CD8-positive, alpha-beta T cell (primary cell): ENCODE measurements at regions of chr7 and their contacts with region 1.

Region 1: DNA sequence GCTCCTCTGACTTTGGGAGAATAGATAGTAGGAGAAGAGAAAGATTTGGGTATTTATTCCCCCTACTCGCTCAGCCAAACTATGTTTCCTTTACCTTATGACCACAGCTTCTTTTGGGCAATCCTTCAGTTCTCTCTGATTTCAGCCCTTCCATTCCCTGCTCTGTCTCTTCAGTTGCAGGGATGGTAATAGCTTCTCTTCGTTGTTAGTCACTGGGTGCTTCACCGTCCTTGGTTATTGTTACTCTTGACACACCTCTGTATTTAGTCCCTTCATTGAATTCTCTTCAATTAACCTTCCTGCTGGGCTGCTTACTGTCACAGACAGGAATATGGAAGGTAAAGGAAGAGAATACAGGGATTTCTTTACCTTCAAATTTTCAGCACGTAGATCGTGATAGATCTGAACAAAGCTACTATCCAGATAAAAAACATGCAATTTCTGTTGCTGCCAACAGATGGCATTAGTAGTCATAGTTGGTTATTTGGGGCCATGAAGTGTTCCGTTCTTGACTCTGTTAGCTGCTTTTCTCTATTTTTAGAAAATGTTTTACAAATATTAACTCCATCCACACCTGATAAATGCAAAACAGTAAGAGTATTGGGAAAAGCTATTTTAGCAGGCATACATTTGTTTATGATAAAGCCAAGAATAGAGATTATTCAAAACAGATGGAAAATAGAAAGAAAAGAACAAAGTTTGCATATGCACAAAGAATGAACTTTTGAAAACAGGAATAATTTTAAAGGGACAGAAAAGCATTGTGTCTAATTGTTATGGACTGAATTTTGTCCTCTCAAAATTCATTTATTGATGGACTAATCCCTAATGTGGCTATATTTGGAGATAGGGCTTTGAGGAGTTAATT is 14.0 kb upstream of the PTTG1IP2 start:
- DNase-seq: peak in 2 of 9 experiments; percentile 41 to 56
- ATAC-seq: peak; percentile 59
- H3K4me3 ChIP-seq: no peak overlapping the region
- H3K4me3 Mint-ChIP-seq: peak overlapping the region; percentile 55
- H3K27ac ChIP-seq: no peak overlapping the region
- H3K27ac Mint-ChIP-seq: no peak overlapping the region
- H3K4me1 ChIP-seq: no peaks in the 10 kb centered on the region
- H3K4me1 Mint-ChIP-seq: peaks cover 7% of the 10 kb centered on the region
- H3K27me3 ChIP-seq: no peaks in the 10 kb centered on the region
- H3K27me3 Mint-ChIP-seq: peaks cover 8% of the 10 kb centered on the region
- CTCF ChIP-seq: peak; percentile 76

Region 2: DNA sequence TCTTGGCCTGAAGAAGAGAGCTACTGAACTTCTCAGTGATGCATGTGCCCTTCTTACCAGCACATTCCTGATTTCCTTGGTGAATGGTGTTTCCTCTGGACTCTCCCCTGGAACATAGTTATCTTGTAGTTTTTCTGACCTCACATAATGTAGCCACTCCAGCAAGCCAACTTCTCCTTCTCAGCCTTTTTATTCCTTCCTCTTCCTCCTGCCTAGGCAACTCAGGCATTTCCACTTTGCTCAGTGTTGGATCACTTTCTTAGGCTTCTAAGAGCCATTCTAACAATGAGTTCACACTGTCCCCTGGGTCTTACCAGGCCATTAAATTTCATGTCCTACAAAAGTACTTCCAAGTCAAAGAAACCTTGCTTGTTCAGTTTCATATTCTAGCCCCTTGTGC is 10.4 kb after region 1 on chr7:
- CTCF ChIA-PET with region 1: interaction called, 11 read pairs
- POLR2A ChIA-PET with region 1: no interaction called
- intact Hi-C with region 1: no loop called
- DNase-seq: no peak
- ATAC-seq: no peak
- H3K4me3 ChIP-seq: no peak overlapping the region
- H3K4me3 Mint-ChIP-seq: no peak overlapping the region
- H3K27ac ChIP-seq: no peak overlapping the region
- H3K27ac Mint-ChIP-seq: no peak overlapping the region
- H3K4me1 ChIP-seq: no peaks in the 10 kb centered on the region
- H3K4me1 Mint-ChIP-seq: peaks cover 8% of the 10 kb centered on the region
- H3K27me3 ChIP-seq: no peaks in the 10 kb centered on the region
- H3K27me3 Mint-ChIP-seq: peaks cover 2% of the 10 kb centered on the region
- CTCF ChIP-seq: no peak

Region 3: DNA sequence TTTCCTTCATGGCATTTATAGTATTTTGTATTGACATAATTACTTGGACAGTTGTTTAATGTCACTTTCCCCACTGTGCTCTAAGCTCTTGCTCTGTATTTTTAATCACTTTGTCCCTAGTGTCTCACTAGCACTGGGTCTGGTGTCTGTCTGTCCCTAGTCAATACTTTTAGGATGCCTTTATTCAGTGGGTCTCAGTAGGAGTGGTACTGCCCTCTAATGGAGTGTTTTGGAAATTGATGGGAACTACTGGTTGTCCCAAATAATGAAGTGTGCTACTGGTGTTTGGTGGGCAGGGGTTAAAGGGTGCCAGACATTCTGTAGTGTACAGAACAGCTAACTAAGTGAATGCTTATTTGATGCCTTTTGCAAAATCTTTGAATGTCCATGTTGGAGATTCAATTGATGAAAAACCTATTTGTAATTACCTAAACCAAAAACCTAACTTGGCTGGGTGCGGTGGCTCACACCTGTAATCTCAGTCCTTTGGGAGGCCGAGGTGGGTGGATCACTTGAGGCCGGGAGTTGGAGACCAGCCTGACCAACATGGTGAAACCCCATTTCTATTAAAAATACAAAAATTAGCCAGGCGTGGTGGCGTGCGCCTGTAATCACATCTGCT is 174.0 kb after region 1 on chr7:
- CTCF ChIA-PET with region 1: no interaction called
- POLR2A ChIA-PET with region 1: no interaction called
- intact Hi-C with region 1: loop called in 1 of 2 experiments (anchors 10 kb)
- DNase-seq: peak in 2 of 9 experiments; percentile 3 to 11
- ATAC-seq: no peak
- H3K4me3 ChIP-seq: no peak overlapping the region
- H3K4me3 Mint-ChIP-seq: no peak overlapping the region
- H3K27ac ChIP-seq: no peak overlapping the region
- H3K27ac Mint-ChIP-seq: no peak overlapping the region
- H3K4me1 ChIP-seq: no peaks in the 10 kb centered on the region
- H3K4me1 Mint-ChIP-seq: no peaks in the 10 kb centered on the region
- H3K27me3 ChIP-seq: no peaks in the 10 kb centered on the region
- H3K27me3 Mint-ChIP-seq: no peaks in the 10 kb centered on the region
- CTCF ChIP-seq: no peak

Region 4: DNA sequence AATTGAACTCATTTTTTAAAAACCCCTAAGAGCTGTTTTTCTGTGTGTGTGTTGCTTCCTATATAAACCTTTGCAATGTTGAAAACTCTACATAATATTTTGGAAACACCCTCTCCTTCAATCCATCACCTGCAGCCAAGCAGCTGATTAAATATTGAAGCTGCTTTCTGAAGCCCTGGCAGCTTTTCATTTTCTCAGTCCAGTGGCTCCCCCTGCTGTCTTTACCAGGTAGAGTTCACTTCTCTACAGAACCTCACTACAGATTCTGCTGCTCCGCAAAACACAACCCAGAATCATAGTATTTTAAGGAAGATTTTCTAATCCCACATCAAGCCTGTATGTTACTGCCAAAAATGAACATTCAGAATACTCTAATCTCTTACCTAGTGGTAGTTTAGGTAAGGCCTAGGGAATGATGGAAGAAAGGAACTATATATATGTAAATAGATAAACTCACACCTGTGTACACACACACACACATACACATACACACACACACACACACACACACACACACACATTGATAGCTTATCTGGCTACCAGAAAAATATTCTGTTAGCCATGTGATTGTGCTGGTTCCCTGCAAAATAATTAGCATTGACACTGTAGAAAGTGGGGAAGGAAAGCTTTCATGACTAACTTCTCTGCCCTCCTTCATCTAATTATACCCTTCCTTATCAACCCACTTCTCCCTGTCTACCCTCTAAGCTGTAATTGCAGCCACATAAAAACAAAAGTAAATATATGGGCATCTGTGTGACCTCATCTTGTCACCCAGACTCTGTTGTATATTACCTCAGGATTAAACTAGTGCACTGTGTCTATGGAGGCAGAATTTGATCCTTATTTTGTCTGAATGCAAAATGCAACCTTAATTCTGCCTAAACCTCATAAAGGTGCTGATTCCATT is 579.3 kb after region 1 on chr7:
- CTCF ChIA-PET with region 1: interaction called, 3 read pairs
- POLR2A ChIA-PET with region 1: no interaction called
- intact Hi-C with region 1: loop called in 1 of 2 experiments (anchors 10 kb)
- DNase-seq: no peak
- ATAC-seq: no peak
- H3K4me3 ChIP-seq: no peak overlapping the region
- H3K4me3 Mint-ChIP-seq: no peak overlapping the region
- H3K27ac ChIP-seq: no peak overlapping the region
- H3K27ac Mint-ChIP-seq: no peak overlapping the region
- H3K4me1 ChIP-seq: no peaks in the 10 kb centered on the region
- H3K4me1 Mint-ChIP-seq: no peaks in the 10 kb centered on the region
- H3K27me3 ChIP-seq: no peaks in the 10 kb centered on the region
- H3K27me3 Mint-ChIP-seq: no peaks in the 10 kb centered on the region
- CTCF ChIP-seq: no peak